Ovary (tissue), 10 donors: ENCODE measurements at regions of chr12 and their contacts with region 1.

Region 1: DNA sequence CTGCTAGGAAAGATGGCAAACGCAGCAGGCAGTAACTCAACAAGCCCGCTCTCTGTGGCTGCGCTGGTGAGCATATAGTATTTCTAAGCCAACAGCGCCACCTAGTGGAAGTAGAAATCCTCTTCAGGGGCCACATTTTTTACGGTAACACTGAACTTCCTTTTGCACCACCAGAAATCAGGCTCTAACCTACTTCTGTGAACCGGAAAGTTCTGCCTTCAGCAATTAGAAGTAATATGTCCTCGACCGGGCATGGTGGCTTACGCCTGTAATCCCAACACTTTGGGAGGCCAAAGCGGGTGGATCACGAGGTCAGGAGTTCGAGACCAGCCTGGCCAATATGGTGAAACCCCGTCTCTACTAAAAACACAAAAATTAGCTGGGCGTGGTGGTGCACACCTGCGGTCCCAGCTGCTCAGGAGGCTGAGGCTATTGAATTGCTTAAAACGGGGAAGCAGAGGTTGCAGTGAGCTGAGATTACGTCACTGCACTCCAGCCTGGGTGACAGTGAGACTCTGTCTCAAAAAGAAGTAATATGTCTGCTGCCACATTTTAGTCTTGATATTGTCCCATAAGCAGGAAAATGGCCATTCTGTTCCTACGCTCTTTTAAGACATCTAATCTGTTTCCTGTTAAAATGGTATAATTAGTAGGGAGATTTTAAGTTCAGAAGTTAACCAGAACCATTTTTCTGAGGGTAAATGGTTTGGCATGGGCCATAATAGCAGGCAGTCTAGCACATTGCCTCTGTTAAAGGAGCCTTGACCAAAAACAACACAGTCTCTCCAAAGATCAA is 26.8 kb downstream of the APOBEC1 start:
- DNase-seq: peak; percentile 55 to 74 (median 64)
- H3K4me3 ChIP-seq: no peak overlapping the region
- H3K27ac ChIP-seq: no peak overlapping the region
- H3K4me1 ChIP-seq: no peaks in the 10 kb centered on the region
- H3K27me3 ChIP-seq: no peaks in the 10 kb centered on the region
- CTCF ChIP-seq: peak; percentile 71 to 89 (median 86)
- EP300 ChIP-seq: no peak
- POLR2A ChIP-seq: no peak

Region 2: GRCh38 chr12:7219599-7220243 is 419.2 kb before region 1 on chr12:
- intact Hi-C with region 1: loop called in 3 of 4 experiments (anchors 5 to 10 kb)
- DNase-seq: peak; percentile 20 to 65 (median 52)
- H3K4me3 ChIP-seq: no peak overlapping the region
- H3K27ac ChIP-seq: no peak overlapping the region
- H3K4me1 ChIP-seq: no peaks in the 10 kb centered on the region
- H3K27me3 ChIP-seq: no peaks in the 10 kb centered on the region
- CTCF ChIP-seq: peak in 2 of 3 donors; percentile 45 to 52
- EP300 ChIP-seq: no peak
- POLR2A ChIP-seq: no peak

Region 3: GRCh38 chr12:7716381-7716780 is 77.4 kb after region 1 on chr12:
- intact Hi-C with region 1: no loop called
- DNase-seq: no peak
- H3K4me3 ChIP-seq: no peak overlapping the region
- H3K27ac ChIP-seq: no peak overlapping the region
- H3K4me1 ChIP-seq: no peaks in the 10 kb centered on the region
- H3K27me3 ChIP-seq: no peaks in the 10 kb centered on the region
- CTCF ChIP-seq: no peak
- EP300 ChIP-seq: no peak
- POLR2A ChIP-seq: no peak